Endothelial cell of umbilical vein (primary cell): ENCODE measurements at regions of chr19 and their contacts with region 1.

Region 1: DNA sequence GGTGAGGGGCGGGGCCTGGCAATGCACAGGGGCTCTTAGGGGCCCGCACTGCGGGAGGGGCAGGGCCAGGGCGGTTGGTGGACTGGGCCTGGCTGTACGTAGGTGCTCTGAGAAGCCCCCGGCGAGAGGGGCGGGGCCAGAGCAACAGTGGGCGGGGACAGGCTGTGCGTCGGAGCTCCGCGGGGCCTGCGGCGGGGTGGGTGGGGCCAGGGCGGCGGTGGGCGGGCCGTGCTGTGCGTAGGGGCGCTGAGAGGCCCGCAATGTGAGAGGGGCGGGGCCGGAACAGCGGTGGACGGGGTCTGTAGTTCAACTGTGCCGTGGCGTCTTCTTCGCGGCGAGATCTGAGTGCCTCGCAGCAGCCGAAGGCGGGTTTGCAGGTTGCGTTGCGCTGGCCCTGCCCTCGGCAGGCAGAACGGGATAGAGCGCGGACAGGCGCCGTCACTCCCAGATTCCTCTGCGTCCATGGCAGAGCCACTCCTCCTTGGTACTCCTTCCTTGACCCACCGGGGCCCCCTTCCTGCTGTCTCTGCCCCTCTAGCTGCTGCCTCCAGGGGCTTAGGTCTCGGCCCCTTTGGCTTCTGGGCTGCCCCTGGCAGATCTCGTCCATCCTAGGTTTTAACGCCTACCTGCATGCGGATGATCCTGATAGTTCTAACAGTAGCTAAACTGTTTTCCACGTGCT is 33.2 kb downstream of the CCNE1 start:
- DNase-seq: peak; percentile 88
- H3K4me3 ChIP-seq: peak overlapping the region; percentile 27 to 57 (median 46)
- H3K27ac ChIP-seq: no peak overlapping the region
- H3K4me1 ChIP-seq: peaks cover 8% of the 10 kb centered on the region
- H3K27me3 ChIP-seq: peaks cover 5 to 20% of the 10 kb centered on the region in 2 experiments
- CTCF ChIP-seq: no peak
- POLR2A ChIP-seq: no peak

Region 2: GRCh38 chr19:29478578-29479565 is 366.2 kb before region 1 on chr19:
- CTCF ChIA-PET with region 1: no interaction called
- POLR2A ChIA-PET with region 1: no interaction called
- dilution Hi-C with region 1: no loop called
- intact Hi-C with region 1: no loop called
- DNase-seq: no peak
- H3K4me3 ChIP-seq: no peak overlapping the region
- H3K27ac ChIP-seq: no peak overlapping the region
- H3K4me1 ChIP-seq: no peaks in the 10 kb centered on the region
- H3K27me3 ChIP-seq: no peaks in the 10 kb centered on the region
- CTCF ChIP-seq: no peak
- POLR2A ChIP-seq: no peak

Region 3: GRCh38 chr19:29771708-29772414 is 73.2 kb before region 1 on chr19:
- CTCF ChIA-PET with region 1: interaction called, 7 read pairs
- POLR2A ChIA-PET with region 1: no interaction called
- dilution Hi-C with region 1: no loop called
- intact Hi-C with region 1: loop called (anchors 2 kb)
- DNase-seq: peak; percentile 38
- H3K4me3 ChIP-seq: no peak overlapping the region
- H3K27ac ChIP-seq: no peak overlapping the region
- H3K4me1 ChIP-seq: no peaks in the 10 kb centered on the region
- H3K27me3 ChIP-seq: no peaks in the 10 kb centered on the region
- CTCF ChIP-seq: peak; percentile 57 to 82
- POLR2A ChIP-seq: no peak

Region 4: DNA sequence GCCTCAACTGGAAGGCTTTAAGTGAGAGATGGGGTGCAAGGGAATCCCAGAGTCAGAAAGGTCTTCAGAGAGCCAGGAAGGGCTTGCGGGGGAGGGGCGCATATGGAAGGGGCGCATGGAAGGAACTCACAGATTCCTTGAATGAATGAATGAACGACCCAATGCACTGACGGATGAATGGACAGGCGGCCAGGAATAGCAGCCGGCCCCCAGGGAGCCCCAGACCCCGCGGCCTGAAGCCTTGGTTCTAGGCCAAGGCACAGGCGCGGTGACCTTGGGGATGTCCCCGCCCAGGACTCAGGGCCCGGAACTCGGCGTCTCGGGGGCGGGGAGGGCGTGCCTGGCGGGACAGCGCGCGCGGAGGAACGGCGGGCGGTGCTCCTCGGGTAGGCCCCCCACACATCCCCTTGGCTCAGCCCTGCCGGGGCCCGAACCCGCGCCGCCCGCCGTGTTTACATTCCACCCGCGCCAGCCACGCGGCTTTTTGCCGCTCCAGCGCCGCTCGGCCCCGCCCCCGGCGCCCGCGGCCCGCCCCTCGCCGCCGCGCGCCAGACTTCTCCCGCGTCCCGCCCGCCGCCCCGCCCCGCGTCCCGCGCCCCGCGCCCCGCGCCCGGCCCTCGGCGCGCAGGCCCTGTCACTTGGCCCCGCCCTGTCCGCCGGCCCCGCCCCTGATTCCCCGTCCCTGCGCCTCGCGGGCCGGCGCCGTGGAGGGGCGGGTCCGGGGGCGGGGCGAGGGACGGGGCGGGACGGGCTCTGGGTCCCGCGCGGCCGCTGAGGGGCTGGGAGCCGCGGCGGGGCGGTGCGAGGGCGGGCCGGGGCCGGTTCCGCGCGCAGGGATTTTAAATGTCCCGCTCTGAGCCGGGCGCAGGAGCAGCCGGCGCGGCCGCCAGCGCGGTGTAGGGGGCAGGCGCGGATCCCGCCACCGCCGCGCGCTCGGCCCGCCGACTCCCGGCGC is 33.6 kb before region 1 on chr19 and contains the start of gene CCNE1:
- CTCF ChIA-PET with region 1: interaction called, 3 read pairs
- POLR2A ChIA-PET with region 1: no interaction called
- dilution Hi-C with region 1: no loop called
- intact Hi-C with region 1: loop called (anchors 1 kb)
- DNase-seq: peak; percentile 82
- H3K4me3 ChIP-seq: peak within 1 kb of the TSS; percentile 4 to 49 (median 26)
- H3K27ac ChIP-seq: no peak within 1 kb of the TSS
- H3K4me1 ChIP-seq: no peaks in the 10 kb centered on the region
- H3K27me3 ChIP-seq: no peaks in the 10 kb centered on the region
- CTCF ChIP-seq: no peak
- POLR2A ChIP-seq: no peak
- total RNA-seq, gene CCNE1: 10.1 and 11.8 TPM in 2 replicates

Region 5: DNA sequence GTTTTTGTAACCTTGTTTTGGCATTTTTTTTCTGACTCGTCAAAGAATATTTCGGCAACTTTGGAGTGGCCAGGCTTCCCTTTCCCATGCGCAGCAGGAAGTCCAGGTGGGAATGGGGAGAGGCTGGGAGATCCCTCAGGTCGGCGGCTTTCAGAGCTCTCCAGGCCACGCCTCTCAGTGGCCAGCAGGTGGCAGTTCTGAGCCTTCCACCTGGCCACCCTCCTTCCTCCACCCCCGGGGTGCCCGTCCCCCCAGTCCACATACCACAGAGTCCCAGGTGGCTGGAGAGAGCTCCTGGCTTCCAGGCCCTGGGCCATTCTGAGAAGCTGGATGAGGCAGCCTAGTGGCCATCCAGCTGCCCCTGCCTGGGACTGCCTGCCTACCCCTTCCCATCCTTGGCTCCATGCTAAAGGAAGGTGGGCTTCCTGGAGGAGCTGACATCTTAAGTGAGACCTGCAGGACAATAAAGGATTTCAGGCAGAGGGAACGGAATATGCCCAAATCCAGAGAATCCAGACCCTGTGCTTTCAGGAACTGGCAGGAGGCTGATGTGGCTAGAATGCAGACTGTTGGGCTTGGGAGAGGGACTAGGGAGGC is 13.1 kb after region 1 on chr19:
- CTCF ChIA-PET with region 1: interaction called, 15 read pairs
- POLR2A ChIA-PET with region 1: interaction called, 7 read pairs
- dilution Hi-C with region 1: no loop called
- intact Hi-C with region 1: no loop called
- DNase-seq: no peak
- H3K4me3 ChIP-seq: no peak overlapping the region
- H3K27ac ChIP-seq: no peak overlapping the region
- H3K4me1 ChIP-seq: no peaks in the 10 kb centered on the region
- H3K27me3 ChIP-seq: no peaks in the 10 kb centered on the region
- CTCF ChIP-seq: peak; percentile 23 to 60
- POLR2A ChIP-seq: no peak

Region 6: GRCh38 chr19:29941828-29942403 is 96.9 kb after region 1 on chr19 and contains the start of gene URI1:
- CTCF ChIA-PET with region 1: interaction called, 4 read pairs
- POLR2A ChIA-PET with region 1: no interaction called
- dilution Hi-C with region 1: no loop called
- intact Hi-C with region 1: loop called (anchors 2 kb)
- DNase-seq: peak; percentile 80
- H3K4me3 ChIP-seq: peak within 1 kb of the TSS; percentile 81 to 99 (median 93)
- H3K27ac ChIP-seq: no peak within 1 kb of the TSS
- H3K4me1 ChIP-seq: peaks cover 10% of the 10 kb centered on the region
- H3K27me3 ChIP-seq: peaks cover 0 to 4% of the 10 kb centered on the region in 2 experiments
- CTCF ChIP-seq: no peak
- POLR2A ChIP-seq: peak; percentile 60
- total RNA-seq, gene URI1: 26.3 and 28.9 TPM in 2 replicates